Dendritic cell treated with granulocyte-macrophage colony-stimulating factor and Interleukin-4, amounts not matched to agents 40 ng/mL and 50 ng/mL, for 4 days (primary cell): ENCODE measurements at regions of chr19 and their contacts with region 1.

Region 1: DNA sequence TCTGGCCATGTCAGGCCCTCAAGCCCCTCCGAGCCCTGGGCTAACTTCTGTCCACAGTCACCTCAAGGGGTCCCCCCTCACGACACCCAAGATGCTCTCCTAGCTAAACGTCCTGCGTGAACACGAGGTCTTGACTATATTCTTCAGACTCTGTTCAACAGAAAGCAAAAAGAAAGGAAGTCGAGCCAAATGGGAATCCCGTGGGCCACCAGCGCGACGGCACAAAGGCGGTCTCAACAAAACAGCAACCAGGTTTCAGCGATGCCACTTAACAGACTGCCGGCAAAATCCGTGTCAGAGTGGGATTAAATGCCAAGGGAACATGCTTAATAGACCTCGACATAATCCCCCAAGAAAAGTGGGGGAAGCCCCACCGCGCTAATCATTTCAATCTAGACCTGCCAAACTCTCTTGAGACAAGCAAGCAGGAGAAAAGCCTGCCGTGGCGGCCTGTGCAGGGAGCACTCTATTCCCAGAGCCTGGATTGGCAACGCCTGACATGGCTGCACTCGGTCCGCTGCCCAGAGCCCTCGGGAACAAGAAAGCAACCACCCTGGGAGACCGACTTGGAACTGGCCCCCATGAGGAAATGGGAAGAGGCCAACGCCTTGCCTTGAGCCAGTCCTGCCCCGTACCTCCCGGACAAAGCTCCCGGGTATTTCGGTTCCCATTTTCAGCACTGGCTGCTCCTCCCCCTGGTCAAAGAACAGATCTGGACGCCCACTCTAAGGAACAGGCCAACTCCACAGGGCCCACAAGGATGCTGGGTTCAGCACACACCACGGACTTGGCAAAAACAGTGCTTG is 16.0 kb downstream of the ZC3H4 start:
- H3K4me3 Mint-ChIP-seq: peak overlapping the region; percentile 54
- H3K27ac Mint-ChIP-seq: peak overlapping the region; percentile 76
- H3K4me1 Mint-ChIP-seq: peaks cover 83% of the 10 kb centered on the region
- H3K27me3 Mint-ChIP-seq: no peaks in the 10 kb centered on the region

Region 2: GRCh38 chr19:47112997-47113849 is 15.6 kb after region 1 on chr19 and contains the start of gene ZC3H4:
- intact Hi-C with region 1: loop called (anchors 2 kb)
- H3K4me3 Mint-ChIP-seq: peak within 1 kb of the TSS; percentile 99
- H3K27ac Mint-ChIP-seq: peak within 1 kb of the TSS; percentile 100
- H3K4me1 Mint-ChIP-seq: peaks cover 37% of the 10 kb centered on the region
- H3K27me3 Mint-ChIP-seq: peaks cover 11% of the 10 kb centered on the region